ENCODE measurements at regions of chrX and their contacts with region 1.

Region 1: GRCh38 chrX:11758400-11759171 is 549 bp downstream of the MSL3 start:
- DNase-seq: no peak
- ATAC-seq: peak; percentile 44
- H3K4me3 ChIP-seq: peak overlapping the region; percentile 60
- H3K27ac ChIP-seq: peak overlapping the region; percentile 90
- H3K4me1 ChIP-seq: peaks cover 7% of the 10 kb centered on the region; the same call in 1 of the 2 replicates
- H3K27me3 ChIP-seq: no peaks in the 10 kb centered on the region
- CTCF ChIP-seq: peak; percentile 34 to 68 (median 59); a peak in 4 of 6 replicates
- EP300 ChIP-seq: peak in 1 of 2 experiments; percentile 10; a peak in 1 of 4 replicates
- POLR2A ChIP-seq: no peak; the same call in 1 of the 2 replicates
- RAD21 ChIP-seq: peak; percentile 43

Region 2: DNA sequence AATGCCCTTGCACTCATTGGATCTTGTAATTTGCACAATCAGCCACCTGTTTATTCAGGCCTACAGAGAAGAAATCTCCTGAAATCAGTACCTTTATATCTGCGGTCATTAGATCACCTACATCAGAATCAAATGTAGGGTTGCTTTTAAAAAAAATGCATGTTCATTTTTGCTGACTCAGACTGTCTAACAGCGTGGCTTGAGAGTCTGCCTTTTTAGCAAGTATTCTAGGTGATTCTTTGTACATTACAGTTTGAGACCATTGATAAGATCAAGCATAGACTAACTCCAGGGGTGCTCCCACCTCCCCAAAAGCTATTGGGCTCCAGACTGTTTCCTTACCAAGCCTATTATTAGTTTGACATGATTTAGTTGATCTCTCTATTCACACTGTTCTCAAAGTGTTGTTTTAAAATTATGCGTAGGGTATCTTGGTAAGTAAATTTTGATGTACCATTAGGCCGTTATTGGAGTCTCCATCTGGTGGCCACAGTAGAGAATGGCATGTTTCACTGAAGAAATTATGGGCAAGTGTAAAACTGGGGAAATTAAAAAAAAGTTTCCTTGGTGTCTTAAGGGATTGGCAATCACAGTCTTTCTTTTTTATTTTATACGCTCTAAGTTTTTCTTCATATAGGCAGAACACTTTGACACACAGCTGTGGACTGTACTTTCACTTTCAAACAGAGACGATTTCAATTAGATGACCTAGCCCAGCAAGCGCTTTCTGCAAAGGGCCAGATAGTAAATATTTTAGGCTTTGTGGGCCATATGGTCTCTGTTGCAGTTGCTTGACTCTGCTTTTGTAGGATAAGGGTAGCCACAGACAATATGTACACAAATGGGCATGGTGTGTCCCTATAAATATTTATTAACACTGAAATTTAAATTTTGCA is 34.2 kb before region 1 on chrX:
- CTCF ChIA-PET with region 1: interaction called, 12 read pairs
- POLR2A ChIA-PET with region 1: no interaction called
- RAD21 ChIA-PET with region 1: interaction called, 6 read pairs
- SMC1A ChIA-PET with region 1: interaction called, 4 read pairs
- in situ Hi-C with region 1: no loop called
- intact Hi-C with region 1: no loop called
- DNase-seq: no peak
- ATAC-seq: peak; percentile 85
- H3K4me3 ChIP-seq: no peak overlapping the region
- H3K27ac ChIP-seq: no peak overlapping the region
- H3K4me1 ChIP-seq: no peaks in the 10 kb centered on the region
- H3K27me3 ChIP-seq: no peaks in the 10 kb centered on the region
- CTCF ChIP-seq: peak; percentile 63 to 68 (median 64)
- EP300 ChIP-seq: no peak
- POLR2A ChIP-seq: no peak
- RAD21 ChIP-seq: peak; percentile 64

Region 3: GRCh38 chrX:11787564-11787963 is 29.0 kb after region 1 on chrX:
- CTCF ChIA-PET with region 1: interaction called, 8 read pairs
- POLR2A ChIA-PET with region 1: interaction called, 207 read pairs
- RAD21 ChIA-PET with region 1: interaction called, 428 read pairs
- SMC1A ChIA-PET with region 1: interaction called, 404 read pairs
- in situ Hi-C with region 1: no loop called
- intact Hi-C with region 1: no loop called
- DNase-seq: no peak
- ATAC-seq: no peak
- H3K4me3 ChIP-seq: no peak overlapping the region
- H3K27ac ChIP-seq: no peak overlapping the region
- H3K4me1 ChIP-seq: peaks cover 20% of the 10 kb centered on the region
- H3K27me3 ChIP-seq: no peaks in the 10 kb centered on the region
- CTCF ChIP-seq: peak; percentile 22 to 60 (median 33); a peak in 5 of 6 replicates
- EP300 ChIP-seq: no peak
- POLR2A ChIP-seq: no peak
- RAD21 ChIP-seq: peak; percentile 46

Measured in GM12878 (cell line).